H1 (cell line): ENCODE measurements at regions of chr5 and their contacts with region 1.

Region 1: DNA sequence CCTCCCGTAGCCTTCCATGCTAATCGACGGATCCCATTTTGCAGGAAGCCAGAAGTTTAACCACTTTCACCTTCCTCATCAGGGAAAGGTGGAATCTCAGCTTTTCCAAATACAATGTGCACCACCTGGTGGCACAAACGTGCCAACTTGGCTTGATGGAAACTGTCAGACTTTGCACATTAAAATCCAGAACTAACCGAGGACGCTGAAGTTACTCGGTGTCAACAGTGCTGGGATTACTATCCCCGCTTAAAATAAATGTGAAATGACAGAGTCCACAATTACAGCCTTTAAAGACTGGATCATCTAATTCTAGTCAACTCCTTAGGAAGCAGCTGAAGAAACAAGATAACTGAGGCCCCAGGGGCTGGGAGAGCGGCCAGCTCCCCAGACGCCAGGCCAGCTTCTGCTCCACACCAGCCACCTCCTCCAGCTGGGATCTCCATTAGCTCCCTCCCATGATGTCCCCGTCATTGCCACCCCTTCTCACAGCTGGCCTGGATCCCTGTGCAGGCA is 50.1 kb upstream of the RETREG1 start:
- DNase-seq: no peak
- H3K4me3 ChIP-seq: no peak overlapping the region
- H3K27ac ChIP-seq: no peak overlapping the region
- H3K4me1 ChIP-seq: no peaks in the 10 kb centered on the region
- H3K27me3 ChIP-seq: no peaks in the 10 kb centered on the region
- CTCF ChIP-seq: peak; percentile 18 to 59 (median 36)
- EP300 ChIP-seq: no peak
- POLR2A ChIP-seq: 0 out of 3 replicates have a peak, but pooled peaks of 1 of the 2 experiments have one; percentile 18
- RAD21 ChIP-seq: peak; percentile 55 to 62

Region 2: GRCh38 chr5:16489322-16489791 is 177.6 kb before region 1 on chr5:
- CTCF ChIA-PET with region 1: interaction called, 22 read pairs
- POLR2A ChIA-PET with region 1: no interaction called
- DNase-seq: no peak
- H3K4me3 ChIP-seq: no peak overlapping the region
- H3K27ac ChIP-seq: no peak overlapping the region
- H3K4me1 ChIP-seq: no peaks in the 10 kb centered on the region
- H3K27me3 ChIP-seq: no peaks in the 10 kb centered on the region
- CTCF ChIP-seq: peak in 2 of 3 experiments; percentile 53 to 63; a peak in 2 of 4 replicates
- EP300 ChIP-seq: no peak
- POLR2A ChIP-seq: no peak
- RAD21 ChIP-seq: peak; percentile 84 to 86

Region 3: DNA sequence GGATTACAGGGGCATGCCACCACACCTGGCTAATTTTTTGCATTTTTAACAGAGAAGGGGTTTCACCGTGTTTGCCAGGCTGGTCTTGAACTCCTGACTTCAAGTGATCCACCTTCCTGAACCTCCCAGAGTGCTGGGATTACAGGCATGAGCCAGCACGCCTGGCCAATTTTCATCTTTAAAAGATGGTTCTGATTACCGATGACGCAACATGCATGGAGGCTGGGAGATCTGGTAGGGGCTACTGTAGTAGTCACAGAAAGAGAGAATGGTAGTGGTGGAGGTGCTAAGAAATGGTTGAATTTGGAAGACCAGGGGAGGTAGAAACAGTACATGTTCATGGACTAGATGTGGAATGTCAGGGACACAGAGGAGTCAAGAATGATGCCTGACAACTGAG is 27.7 kb before region 1 on chr5:
- CTCF ChIA-PET with region 1: no interaction called
- POLR2A ChIA-PET with region 1: no interaction called
- DNase-seq: no peak
- H3K4me3 ChIP-seq: no peak overlapping the region
- H3K27ac ChIP-seq: no peak overlapping the region
- H3K4me1 ChIP-seq: 0 out of 7 replicates have a peak, but pooled peaks cover 0 to 3% (median 0%) of the 10 kb centered on the region in 4 experiments
- H3K27me3 ChIP-seq: no peaks in the 10 kb centered on the region
- CTCF ChIP-seq: no peak
- EP300 ChIP-seq: no peak
- POLR2A ChIP-seq: no peak
- RAD21 ChIP-seq: no peak

Region 4: DNA sequence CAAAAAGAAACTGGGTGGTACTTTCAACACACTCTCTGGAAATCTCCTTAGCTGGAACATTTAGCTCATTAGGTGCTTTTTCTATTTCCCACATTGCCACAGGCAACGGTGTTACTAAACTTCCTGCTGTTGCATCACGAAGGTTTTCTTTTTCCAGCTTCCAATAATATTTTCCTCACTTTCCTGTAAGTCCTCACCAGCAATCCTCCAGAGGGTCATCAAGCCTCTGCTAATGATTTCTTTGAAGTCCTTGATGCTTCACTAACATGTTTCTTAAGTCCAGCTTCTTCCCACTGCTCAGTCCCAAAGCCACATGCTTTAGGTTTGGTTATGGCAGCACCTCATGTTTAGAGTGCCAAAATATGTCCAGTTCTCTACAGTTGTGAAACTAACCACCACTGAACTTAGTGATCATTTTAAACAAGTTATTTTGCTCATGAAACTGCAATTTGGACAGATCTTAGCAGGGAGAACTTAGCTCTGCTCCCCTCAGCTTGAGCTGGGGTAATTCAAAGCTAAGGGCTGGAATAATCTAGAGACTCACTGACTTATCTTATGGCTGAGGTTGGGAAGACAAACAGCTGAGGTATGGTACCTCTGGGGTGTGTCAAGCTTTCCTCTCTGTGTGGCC is 10.3 kb before region 1 on chr5:
- CTCF ChIA-PET with region 1: interaction called, 14 read pairs
- POLR2A ChIA-PET with region 1: no interaction called
- DNase-seq: no peak
- H3K4me3 ChIP-seq: no peak overlapping the region
- H3K27ac ChIP-seq: no peak overlapping the region
- H3K4me1 ChIP-seq: no peaks in the 10 kb centered on the region
- H3K27me3 ChIP-seq: no peaks in the 10 kb centered on the region
- CTCF ChIP-seq: no peak
- EP300 ChIP-seq: no peak
- POLR2A ChIP-seq: no peak
- RAD21 ChIP-seq: no peak

Region 5: GRCh38 chr5:16679863-16680262 is 12.9 kb after region 1 on chr5:
- CTCF ChIA-PET with region 1: interaction called, 51 read pairs
- POLR2A ChIA-PET with region 1: interaction called, 5 read pairs
- DNase-seq: peak in 1 of 2 experiments; percentile 65
- H3K4me3 ChIP-seq: no peak overlapping the region
- H3K27ac ChIP-seq: no peak overlapping the region
- H3K4me1 ChIP-seq: no peaks in the 10 kb centered on the region
- H3K27me3 ChIP-seq: no peaks in the 10 kb centered on the region
- CTCF ChIP-seq: peak; percentile 36 to 67 (median 61)
- EP300 ChIP-seq: no peak
- POLR2A ChIP-seq: no peak
- RAD21 ChIP-seq: peak; percentile 49 to 52